ENCODE measurements at regions of chrX and their contacts with region 1.

Region 1: GRCh38 chrX:114058988-114059418 is 524.9 kb upstream of the HTR2C start:
- DNase-seq: peak; percentile 58
- H3K4me3 ChIP-seq: peak overlapping the region; percentile 16
- H3K27ac ChIP-seq: peak overlapping the region; percentile 44
- H3K4me1 ChIP-seq: no peaks in the 10 kb centered on the region
- H3K27me3 ChIP-seq: no peaks in the 10 kb centered on the region
- CTCF ChIP-seq: no peak

Region 2: DNA sequence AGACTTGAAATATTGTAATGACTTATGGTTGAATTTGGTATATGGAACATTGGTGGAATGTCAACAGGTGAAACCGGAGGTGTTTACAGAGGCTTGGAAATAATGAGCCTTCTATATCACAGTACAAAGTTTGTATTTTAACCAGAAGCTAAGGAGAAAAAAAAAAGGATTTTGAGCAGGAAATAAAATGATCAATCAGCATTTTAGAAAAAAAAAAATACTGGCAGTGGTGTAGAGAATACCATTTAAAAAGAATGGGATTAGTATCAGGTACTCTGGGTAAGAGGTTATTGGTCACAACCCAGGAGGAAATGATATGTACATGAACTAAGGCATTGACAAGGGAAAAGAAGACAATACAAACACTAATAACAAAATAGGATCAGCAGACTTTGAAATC is 62.2 kb before region 1 on chrX:
- intact Hi-C with region 1: loop called (anchors 10 kb)
- DNase-seq: no peak
- H3K4me3 ChIP-seq: no peak overlapping the region
- H3K27ac ChIP-seq: no peak overlapping the region
- H3K4me1 ChIP-seq: no peaks in the 10 kb centered on the region
- H3K27me3 ChIP-seq: no peaks in the 10 kb centered on the region
- CTCF ChIP-seq: no peak

Region 3: GRCh38 chrX:114134465-114134864 is 75.5 kb after region 1 on chrX:
- intact Hi-C with region 1: no loop called
- DNase-seq: no peak
- H3K4me3 ChIP-seq: no peak overlapping the region
- H3K27ac ChIP-seq: no peak overlapping the region
- H3K4me1 ChIP-seq: no peaks in the 10 kb centered on the region
- H3K27me3 ChIP-seq: no peaks in the 10 kb centered on the region
- CTCF ChIP-seq: no peak

Region 4: DNA sequence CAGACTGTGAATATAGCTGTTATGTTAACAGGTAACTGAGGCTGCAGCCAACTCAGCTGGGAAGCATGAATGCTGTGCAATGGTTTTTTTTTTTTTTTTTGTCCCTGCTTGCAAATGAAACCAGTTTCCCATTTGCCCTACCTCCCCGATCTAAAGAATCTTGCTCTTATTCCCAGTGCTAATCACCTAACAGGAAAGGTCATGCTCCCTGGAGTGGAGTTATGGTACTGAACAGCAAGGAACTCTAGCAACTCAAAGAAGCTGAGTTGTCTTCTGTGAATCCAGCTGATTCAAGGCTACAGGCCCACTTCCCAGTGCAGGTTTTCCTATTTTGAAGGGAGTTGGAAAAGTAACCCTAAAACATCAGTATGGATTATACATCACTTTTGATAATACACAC is 577.0 kb after region 1 on chrX:
- intact Hi-C with region 1: no loop called
- DNase-seq: no peak
- H3K4me3 ChIP-seq: no peak overlapping the region
- H3K27ac ChIP-seq: no peak overlapping the region
- H3K4me1 ChIP-seq: no peaks in the 10 kb centered on the region
- H3K27me3 ChIP-seq: no peaks in the 10 kb centered on the region
- CTCF ChIP-seq: no peak

Measured in colonic mucosa (tissue), 4 donors.